Prostate gland (tissue), 2 donors: ENCODE measurements at regions of chr9 and their contacts with region 1.

Region 1: DNA sequence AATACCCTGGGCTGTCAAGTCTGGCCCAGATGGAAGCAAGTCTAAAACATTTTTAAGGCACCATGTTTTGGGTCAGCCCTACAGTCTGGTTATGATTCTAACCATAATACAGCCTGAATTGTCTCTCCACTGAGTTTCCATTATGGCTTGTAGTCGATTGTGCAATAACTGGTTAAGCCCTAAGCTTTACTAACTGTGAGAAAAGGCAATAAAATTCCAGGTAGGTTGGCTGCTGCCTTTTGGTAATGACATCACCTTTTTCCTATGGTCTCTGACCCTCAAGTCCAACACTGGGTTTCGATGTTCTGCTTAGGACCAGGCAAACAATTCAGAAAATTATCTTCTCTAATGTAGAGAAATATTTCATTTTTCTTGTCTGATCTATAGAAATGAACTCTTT is 243.3 kb downstream of the ACTL7B start:
- DNase-seq: no peak
- H3K4me3 ChIP-seq: no peak overlapping the region
- H3K27ac ChIP-seq: no peak overlapping the region
- H3K4me1 ChIP-seq: no peaks in the 10 kb centered on the region
- H3K27me3 ChIP-seq: no peaks in the 10 kb centered on the region
- CTCF ChIP-seq: no peak
- POLR2A ChIP-seq: no peak

Region 2: DNA sequence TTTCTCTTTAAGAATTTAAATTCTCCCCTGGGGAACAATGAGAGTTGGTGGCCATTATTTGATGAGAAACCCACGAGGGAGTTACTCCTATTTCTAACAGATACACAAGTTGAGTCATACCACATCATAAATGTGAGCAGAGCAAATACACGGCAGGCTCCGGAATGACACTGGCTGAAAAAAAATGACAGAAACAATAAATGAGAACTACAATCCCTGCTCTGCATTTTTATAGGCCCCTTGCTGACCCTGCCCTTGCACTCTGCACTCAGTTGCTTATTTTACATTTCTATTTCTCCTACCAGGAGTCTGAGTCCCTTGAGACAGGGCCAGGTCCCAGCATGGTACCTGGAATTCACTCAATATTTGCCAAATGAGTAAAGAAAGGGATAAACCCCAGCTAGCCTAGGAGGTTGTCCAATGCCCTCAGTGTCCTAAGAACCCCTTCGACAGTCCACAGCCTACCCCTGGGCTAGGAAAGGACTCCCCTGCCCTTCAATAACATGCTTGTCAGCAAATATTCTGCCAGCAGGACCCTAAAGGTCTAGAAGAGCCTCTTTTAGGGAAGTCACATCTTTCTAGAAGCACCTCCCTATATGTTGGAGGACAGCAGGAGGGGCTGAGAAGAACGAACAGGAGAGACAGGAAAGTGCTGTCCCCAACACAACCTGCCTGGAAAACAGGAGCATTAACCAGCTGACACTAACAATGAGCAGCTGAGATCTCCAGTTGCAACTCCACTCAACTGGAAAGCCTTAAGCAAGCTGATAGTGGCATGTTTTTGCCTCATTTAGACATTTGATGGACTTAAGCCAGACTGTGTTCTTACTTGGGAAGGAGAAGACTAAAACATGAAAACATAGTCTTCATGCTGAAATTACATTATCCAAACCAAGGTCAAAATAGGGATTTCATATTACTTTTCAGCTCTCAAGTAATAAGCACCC is 52.1 kb after region 1 on chr9:
- intact Hi-C with region 1: loop called (anchors 5 kb)
- DNase-seq: no peak
- H3K4me3 ChIP-seq: no peak overlapping the region
- H3K27ac ChIP-seq: no peak overlapping the region
- H3K4me1 ChIP-seq: no peaks in the 10 kb centered on the region
- H3K27me3 ChIP-seq: no peaks in the 10 kb centered on the region
- CTCF ChIP-seq: no peak
- POLR2A ChIP-seq: no peak